ENCODE measurements at regions of chr6 and their contacts with region 1.

Region 1: DNA sequence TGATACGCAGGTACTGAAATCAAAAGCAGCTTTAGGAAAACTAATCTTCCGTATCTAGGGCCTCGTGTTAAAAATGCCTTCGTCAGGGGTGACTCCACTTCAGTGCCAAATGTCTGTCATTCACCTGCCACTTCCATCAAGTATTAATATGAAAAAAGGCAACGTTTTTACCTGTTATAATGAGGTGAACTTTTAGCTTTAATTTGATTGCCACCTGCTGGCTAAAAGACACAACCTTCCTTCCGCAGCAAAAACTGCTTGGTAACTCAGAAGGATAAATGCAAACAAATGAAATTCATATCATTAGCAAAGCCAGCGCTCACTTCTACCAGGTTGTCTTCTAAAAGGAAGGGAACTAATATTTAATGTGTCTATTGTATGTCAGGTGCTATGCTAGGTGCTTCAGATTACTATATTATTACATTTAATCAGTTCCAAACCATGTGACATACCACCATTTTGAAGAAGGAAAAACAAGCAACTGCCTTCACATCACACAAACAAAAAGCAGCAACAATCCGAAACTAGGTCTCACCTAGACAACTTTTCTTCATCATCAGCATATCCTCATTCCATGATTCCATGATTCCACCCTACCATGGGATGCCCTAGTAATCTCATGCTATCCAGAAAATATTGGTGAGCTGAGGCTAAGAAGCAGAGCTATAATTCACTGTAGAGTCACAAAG is 20.6 kb upstream of the ARHGAP18 start:
- DNase-seq: no peak
- H3K4me3 ChIP-seq: no peak overlapping the region
- H3K27ac ChIP-seq: no peak overlapping the region
- H3K4me1 ChIP-seq: no peaks in the 10 kb centered on the region
- H3K27me3 ChIP-seq: no peaks in the 10 kb centered on the region
- CTCF ChIP-seq: peak; percentile 49 to 54 (median 51)
- POLR2A ChIP-seq: no peak

Region 2: DNA sequence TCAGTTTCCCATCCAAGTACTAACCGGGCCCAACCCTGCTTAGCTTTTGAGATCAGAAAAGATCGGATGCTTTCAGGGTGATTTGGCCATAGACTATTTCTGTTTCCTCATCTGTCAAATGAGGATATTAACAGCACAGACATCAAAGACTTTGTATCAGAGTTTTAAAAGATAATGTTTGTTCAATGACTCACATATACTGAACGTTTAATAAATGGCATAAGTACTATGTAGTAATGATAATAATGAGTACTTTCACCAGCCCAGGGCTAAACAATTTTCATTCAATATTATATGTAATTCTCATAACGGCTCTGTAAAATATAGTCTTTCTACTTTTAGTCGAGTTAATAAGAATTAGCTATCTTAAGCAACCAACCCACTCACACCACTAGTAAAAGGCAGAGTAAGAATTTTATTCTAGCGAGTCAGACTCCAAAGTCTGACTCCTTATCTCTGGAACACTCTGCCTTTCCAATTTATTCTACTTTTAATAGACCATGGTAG is 237.2 kb before region 1 on chr6:
- intact Hi-C with region 1: loop called (anchors 2 kb)
- DNase-seq: no peak
- H3K4me3 ChIP-seq: no peak overlapping the region
- H3K27ac ChIP-seq: peak overlapping the region in 1 of 2 donors; percentile 92
- H3K4me1 ChIP-seq: peaks cover 0 to 13% of the 10 kb centered on the region in 2 donors
- H3K27me3 ChIP-seq: no peaks in the 10 kb centered on the region
- CTCF ChIP-seq: no peak
- POLR2A ChIP-seq: no peak

Region 3: DNA sequence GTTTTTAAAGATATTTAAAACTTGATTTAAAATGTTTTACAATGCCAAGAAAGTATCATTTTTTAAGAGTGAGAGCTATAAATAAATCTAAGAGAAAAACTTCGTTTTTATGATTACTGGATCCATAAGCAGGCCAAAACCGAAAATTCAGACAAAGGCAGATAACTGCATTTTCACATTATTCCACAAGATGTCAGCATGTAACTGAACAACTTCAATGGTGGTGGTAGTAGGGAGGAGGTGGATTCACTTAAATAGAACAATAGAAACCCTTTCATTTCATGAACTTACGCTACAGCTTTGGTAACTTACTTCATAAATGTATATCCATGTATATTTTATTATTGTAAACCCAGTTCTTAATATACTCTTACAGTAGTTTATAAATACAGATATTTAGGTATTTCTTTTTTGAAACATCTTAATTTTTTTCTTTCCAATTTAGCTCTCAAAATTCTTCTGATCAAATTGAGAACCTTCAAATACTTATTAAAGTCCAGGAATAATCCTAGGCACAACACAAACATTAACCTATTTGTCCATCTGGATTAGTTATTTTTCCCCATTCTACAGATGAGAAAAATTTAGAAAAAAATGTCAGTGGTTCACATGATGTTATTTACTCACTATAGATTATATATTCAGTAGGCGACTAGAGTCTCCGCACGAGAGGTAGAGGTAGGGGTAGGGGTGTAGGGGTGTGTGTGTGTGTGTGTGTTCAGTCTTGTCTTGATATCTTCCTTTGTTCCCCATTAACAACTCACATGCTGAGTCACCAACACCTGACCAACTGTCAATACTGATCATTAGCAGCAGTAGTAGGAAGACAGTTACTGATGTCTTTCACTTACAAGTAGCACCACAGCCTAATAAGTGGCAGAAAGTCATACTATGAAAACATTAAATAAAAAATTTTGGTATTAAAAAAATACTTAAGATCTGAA is 132.1 kb before region 1 on chr6:
- intact Hi-C with region 1: loop called (anchors 5 kb)
- DNase-seq: no peak
- H3K4me3 ChIP-seq: no peak overlapping the region
- H3K27ac ChIP-seq: no peak overlapping the region
- H3K4me1 ChIP-seq: no peaks in the 10 kb centered on the region
- H3K27me3 ChIP-seq: no peaks in the 10 kb centered on the region
- CTCF ChIP-seq: peak; percentile 70 to 93 (median 91)
- POLR2A ChIP-seq: no peak

Measured in breast epithelium (tissue), 4 donors.